ENCODE measurements at regions of chr2 and their contacts with region 1.

Region 1: DNA sequence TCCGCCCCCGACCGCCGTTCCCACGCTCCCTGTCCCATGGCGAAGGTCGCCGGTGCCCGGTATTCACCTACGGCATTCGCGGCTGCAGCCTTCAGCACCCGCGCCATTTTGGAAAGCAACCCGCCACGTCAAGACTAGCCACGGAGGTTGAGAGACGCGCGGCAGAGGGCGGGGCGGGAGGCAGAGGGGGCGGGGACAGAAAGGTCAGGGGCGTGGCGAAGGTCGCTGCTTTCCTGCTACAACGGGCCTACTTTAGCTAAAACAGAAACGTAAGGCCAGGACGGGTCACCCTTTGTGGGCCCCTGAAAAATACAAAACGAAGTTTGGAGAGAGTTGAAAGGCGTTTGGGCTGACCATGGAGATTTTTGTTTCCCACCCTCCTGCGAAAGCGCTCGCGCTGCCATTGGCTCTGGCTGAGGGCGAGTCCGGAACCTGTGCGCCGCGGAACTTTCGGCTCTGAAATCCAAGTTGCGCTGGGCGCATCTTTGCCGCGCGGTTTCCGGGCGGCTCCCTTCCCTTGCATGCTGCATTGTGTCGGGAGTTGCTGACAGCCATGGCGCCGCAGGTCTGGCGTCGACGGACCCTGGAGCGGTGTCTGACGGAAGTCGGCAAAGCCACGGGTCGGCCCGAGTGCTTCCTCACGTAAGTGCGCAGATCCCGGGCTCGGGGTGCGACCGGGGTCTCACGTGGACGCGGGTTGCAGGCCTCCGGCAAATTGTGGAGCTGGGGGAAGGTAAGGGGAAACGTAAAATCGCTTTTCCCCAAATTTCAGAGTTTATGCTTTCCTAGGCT is at the starts of genes MCEE and MPHOSPH10:
- DNase-seq: peak; percentile 91
- H3K4me3 Mint-ChIP-seq: no peak within 1 kb of the TSS
- H3K27ac Mint-ChIP-seq: no peak within 1 kb of the TSS
- H3K4me1 Mint-ChIP-seq: peaks cover 18% of the 10 kb centered on the region
- H3K27me3 Mint-ChIP-seq: no peaks in the 10 kb centered on the region
- total RNA-seq, gene MCEE: 18.1 to 19.1 TPM
- total RNA-seq, gene MPHOSPH10: 25.5 to 26.2 TPM

Region 2: GRCh38 chr2:71120213-71120612 is 10.1 kb before region 1 on chr2:
- CTCF ChIA-PET with region 1: no interaction called
- POLR2A ChIA-PET with region 1: interaction called, 12 read pairs
- DNase-seq: no peak
- H3K4me3 Mint-ChIP-seq: no peak overlapping the region
- H3K27ac Mint-ChIP-seq: no peak overlapping the region
- H3K4me1 Mint-ChIP-seq: no peaks in the 10 kb centered on the region
- H3K27me3 Mint-ChIP-seq: no peaks in the 10 kb centered on the region

Region 3: DNA sequence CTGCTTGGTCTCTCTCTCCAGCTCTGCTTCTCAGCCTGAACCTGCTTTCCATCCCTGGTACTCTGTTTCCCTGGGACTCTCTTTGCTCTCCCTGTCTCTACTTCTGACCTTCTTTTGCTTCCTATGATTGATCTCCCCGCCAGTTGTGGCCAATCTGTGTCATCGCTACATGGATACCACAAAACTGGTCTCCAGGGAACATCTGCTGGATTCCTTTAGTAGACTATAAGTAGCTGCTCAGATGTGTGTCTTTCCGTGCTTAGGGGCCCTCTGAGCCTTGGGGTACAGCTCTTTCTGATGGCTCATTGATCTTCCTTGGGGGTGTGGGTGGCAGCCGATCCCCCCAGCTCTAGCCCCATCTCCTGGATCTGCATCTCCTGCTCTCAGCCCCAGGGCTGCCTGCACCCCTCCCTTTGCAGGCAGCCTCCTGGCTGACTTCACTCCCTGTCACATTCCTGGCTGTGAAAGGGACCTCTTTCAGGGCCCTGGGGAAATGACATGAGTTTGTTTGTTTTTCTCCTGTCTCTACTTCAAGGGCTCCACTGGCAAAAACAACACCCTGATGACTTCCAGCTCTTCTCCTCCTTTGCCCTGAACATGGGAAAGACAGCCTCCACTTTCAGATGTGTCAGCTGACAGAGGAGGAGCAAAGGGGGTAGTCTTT is 683.6 kb after region 1 on chr2:
- CTCF ChIA-PET with region 1: no interaction called
- POLR2A ChIA-PET with region 1: no interaction called
- DNase-seq: no peak
- H3K4me3 Mint-ChIP-seq: no peak overlapping the region
- H3K27ac Mint-ChIP-seq: no peak overlapping the region
- H3K4me1 Mint-ChIP-seq: no peaks in the 10 kb centered on the region
- H3K27me3 Mint-ChIP-seq: peaks cover 1% of the 10 kb centered on the region

Measured in activated CD4-positive, alpha-beta memory T cell treated with anti-CD3 and anti-CD28 coated beads, Interleukin-2, amount 10 ng/mL, durations not matched to agents 7 days and 5 days (primary cell).